Common myeloid progenitor, CD34-positive (primary cell): ENCODE measurements at regions of chr13 and their contacts with region 1.

Region 1: GRCh38 chr13:95275322-95276036 is 25.8 kb downstream of the ABCC4 start:
- DNase-seq: no peak
- H3K4me3 ChIP-seq: no peak overlapping the region
- H3K27ac ChIP-seq: no peak overlapping the region
- H3K4me1 ChIP-seq: peaks cover 0 to 31% (median 9%) of the 10 kb centered on the region in 4 experiments
- H3K27me3 ChIP-seq: no peaks in the 10 kb centered on the region

Region 2: GRCh38 chr13:95289020-95289444 is 13.6 kb after region 1 on chr13:
- CTCF ChIA-PET with region 1: interaction called, 11 read pairs
- POLR2A ChIA-PET with region 1: no interaction called
- DNase-seq: peak in 1 of 3 donors; percentile 35
- H3K4me3 ChIP-seq: no peak overlapping the region
- H3K27ac ChIP-seq: no peak overlapping the region
- H3K4me1 ChIP-seq: peaks cover 0 to 15% (median 5%) of the 10 kb centered on the region in 4 experiments
- H3K27me3 ChIP-seq: no peaks in the 10 kb centered on the region